BJ (cell line): ENCODE measurements at regions of chr10 and their contacts with region 1.

Region 1: GRCh38 chr10:128069351-128070051 is 56.7 kb downstream of the MKI67 start:
- DNase-seq: no peak
- H3K4me3 ChIP-seq: no peak overlapping the region
- H3K27me3 ChIP-seq: no peaks in the 10 kb centered on the region; the same call in 1 of the 2 replicates
- CTCF ChIP-seq: peak; percentile 80

Region 2: GRCh38 chr10:127906548-127907377 is 162.7 kb before region 1 on chr10 and contains the start of gene PTPRE:
- CTCF ChIA-PET with region 1: interaction called, 32 read pairs
- POLR2A ChIA-PET with region 1: no interaction called
- DNase-seq: no peak
- H3K4me3 ChIP-seq: peak within 1 kb of the TSS; percentile 28
- H3K27me3 ChIP-seq: no peaks in the 10 kb centered on the region
- CTCF ChIP-seq: peak; percentile 28; the same call in 1 of the 2 replicates
- polyA plus RNA-seq, gene PTPRE: 0.09 and 0.12 TPM in 2 replicates

Region 3: GRCh38 chr10:128016423-128017060 is 53.0 kb before region 1 on chr10:
- CTCF ChIA-PET with region 1: interaction called, 10 read pairs
- POLR2A ChIA-PET with region 1: no interaction called
- DNase-seq: no peak
- H3K4me3 ChIP-seq: no peak overlapping the region
- H3K27me3 ChIP-seq: no peaks in the 10 kb centered on the region
- CTCF ChIP-seq: no peak

Region 4: DNA sequence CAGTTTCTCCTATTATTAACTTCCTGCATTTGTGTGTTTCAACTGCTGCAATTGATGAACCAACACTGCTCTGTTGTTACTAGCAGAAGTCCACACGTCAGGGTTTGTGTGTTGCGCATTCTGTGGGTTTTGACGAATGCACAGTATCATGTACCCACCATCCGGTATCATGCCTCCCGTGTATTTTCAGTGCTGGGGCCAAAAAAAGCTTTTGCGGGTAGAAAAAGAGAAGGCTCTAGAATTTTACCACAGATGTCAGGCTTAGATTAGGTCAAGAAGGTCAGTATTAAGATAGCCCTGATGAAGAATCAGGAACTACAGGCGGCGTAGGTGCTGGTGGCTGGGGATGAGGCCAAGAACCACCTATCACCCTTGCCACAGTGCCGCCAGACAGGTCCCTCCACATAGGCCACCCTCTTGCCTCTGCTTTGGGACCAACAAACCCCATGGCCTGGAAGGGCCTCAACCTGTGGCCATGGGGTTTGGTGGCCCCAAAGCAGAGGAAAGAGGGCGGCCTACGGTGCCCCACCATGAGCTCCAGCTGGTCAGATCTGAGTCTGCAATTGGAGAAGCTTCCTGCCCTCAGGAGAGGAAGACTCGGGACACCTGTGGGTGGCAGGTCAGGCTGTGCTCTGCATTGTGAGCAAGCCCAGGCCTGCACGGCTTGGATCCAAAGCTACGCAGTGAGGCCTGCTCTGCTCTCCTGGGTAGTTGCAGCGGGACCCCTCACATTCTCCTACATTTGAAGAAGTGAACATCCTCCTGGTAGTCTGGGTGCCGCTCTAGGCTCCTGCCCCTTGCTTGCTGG is 15.1 kb before region 1 on chr10:
- CTCF ChIA-PET with region 1: interaction called, 19 read pairs
- POLR2A ChIA-PET with region 1: no interaction called
- DNase-seq: no peak
- H3K4me3 ChIP-seq: no peak overlapping the region
- H3K27me3 ChIP-seq: no peaks in the 10 kb centered on the region
- CTCF ChIP-seq: no peak

Region 5: GRCh38 chr10:128150045-128150493 is 80.6 kb after region 1 on chr10:
- CTCF ChIA-PET with region 1: interaction called, 31 read pairs
- POLR2A ChIA-PET with region 1: no interaction called
- DNase-seq: no peak
- H3K4me3 ChIP-seq: peak overlapping the region; percentile 66
- H3K27me3 ChIP-seq: peaks cover 7% of the 10 kb centered on the region; the same call in 1 of the 2 replicates
- CTCF ChIP-seq: peak; percentile 81

Region 6: DNA sequence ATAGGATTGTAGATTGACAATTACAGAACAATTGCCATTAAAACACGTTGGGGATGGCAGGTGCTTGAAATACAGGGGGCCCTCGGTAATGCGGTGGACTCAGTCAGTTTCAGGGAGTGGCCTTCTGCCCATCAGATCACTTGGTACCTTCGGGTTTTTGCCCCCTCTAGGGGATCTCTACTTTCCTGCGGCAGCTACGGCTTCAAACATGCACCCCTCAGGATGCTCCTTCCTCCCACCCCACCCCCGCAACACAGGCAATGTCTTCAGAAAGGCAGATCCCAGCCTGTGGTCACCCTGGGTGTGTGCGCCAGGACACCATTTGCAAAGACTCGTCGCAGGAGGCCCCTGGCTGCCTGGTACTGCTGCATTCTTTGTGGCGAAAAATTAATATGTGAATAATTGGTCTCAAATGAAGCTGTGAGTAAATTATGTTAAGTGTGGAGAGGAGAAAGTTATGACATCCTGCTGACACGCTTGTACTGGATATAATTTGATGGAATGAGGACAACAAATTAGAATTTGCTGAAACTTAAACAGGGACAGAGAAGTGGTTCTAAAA is 487.7 kb after region 1 on chr10:
- CTCF ChIA-PET with region 1: no interaction called
- POLR2A ChIA-PET with region 1: no interaction called
- DNase-seq: no peak
- H3K4me3 ChIP-seq: no peak overlapping the region
- H3K27me3 ChIP-seq: no peaks in the 10 kb centered on the region
- CTCF ChIP-seq: no peak